ENCODE measurements at regions of chr2 and their contacts with region 1.

Region 1: DNA sequence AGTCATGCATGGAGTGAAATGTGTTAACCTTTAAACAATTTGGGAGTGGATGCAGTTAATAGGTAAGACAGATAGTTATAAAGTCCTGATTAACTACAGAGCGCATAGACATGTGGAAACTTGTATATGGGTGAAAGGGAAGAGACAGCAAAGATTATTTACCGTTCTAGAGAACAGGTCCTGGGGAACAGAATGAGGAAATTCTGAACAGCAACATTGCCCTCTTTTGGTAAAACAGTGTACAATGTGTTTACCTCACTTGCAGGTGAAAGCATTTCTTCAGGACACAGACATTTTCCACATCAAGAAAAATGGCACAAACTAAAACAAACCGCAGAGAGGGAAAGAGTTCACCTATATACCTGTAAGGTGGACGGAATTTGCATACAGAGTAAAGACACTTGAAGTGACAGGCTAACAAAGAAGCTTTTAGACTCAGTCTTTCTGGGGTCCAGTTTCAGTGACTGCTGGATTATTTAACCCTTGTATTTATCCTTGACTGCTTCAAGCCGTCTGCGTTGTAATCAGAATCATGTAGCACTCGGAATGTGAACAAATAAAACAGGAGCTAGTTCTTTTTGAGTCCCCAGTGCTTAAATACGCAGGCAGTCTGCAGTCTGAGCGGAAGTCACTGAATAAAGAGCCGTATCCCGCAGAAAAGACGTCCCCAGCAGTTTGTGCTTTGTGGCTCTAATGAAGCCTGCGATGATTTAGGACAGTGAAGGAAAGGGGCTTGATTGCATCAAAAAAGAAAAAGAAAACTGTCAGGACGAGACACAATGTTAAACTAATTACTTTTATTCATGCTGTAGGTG is 364.8 kb upstream of the GALNT5 start:
- DNase-seq: peak; percentile 46
- H3K4me3 ChIP-seq: peak overlapping the region in 1 of 3 experiments; percentile 56
- H3K27ac ChIP-seq: no peak overlapping the region
- H3K4me1 ChIP-seq: peaks cover 9% of the 10 kb centered on the region
- H3K27me3 ChIP-seq: peaks cover 14 to 35% of the 10 kb centered on the region in 2 experiments
- CTCF ChIP-seq: peak in 1 of 2 donors; percentile 5
- POLR2A ChIP-seq: no peak

Region 2: GRCh38 chr2:155755481-155755880 is 1137.2 kb before region 1 on chr2:
- CTCF ChIA-PET with region 1: no interaction called
- POLR2A ChIA-PET with region 1: no interaction called
- dilution Hi-C with region 1: no loop called
- intact Hi-C with region 1: loop called (anchors 5 kb)
- DNase-seq: no peak
- H3K4me3 ChIP-seq: no peak overlapping the region
- H3K27ac ChIP-seq: no peak overlapping the region
- H3K4me1 ChIP-seq: no peaks in the 10 kb centered on the region
- H3K27me3 ChIP-seq: no peaks in the 10 kb centered on the region
- CTCF ChIP-seq: no peak
- POLR2A ChIP-seq: no peak

Region 3: DNA sequence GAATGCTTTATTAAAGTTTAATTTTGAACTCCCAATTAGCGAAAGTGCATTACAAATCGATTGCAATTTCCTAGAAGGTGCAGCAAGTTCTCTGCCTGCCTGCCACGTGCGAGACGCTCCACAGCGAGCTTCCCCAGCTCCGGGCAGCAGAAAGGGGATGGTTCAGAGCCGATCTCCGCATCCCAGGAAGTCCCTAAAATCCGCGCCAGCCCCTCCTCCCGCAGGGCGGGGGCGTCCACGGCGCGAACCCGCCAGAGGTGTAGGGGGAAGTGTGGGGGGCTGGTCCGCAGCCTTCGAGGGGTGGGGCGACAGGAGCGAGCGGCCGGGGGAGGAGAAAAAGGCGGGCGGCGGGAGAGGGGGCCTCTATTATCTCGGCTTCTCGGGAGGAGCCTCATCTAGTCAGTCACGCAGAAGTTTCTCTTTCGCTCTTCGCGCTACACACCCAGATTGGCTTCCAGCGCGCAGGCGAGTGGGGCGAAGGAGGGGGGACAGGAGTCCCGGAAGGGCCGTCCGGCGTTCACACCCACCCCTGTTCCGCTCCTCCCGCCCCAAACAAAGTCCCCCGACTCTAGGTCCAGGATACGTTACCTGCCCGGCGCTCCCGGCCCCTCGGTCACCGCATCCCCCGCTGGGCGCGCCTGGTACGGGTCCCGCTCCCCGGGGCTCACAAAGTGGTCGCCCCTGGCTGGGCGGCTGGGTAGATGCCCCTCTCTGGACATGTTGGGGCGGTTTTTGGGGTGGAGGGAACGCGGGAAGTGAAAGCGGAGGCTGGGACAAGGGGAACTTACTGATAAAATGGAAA is 551.0 kb before region 1 on chr2:
- CTCF ChIA-PET with region 1: no interaction called
- POLR2A ChIA-PET with region 1: no interaction called
- dilution Hi-C with region 1: no loop called
- intact Hi-C with region 1: loop called (anchors 5 kb)
- DNase-seq: peak; percentile 83
- H3K4me3 ChIP-seq: peak overlapping the region; percentile 69 to 97 (median 87)
- H3K27ac ChIP-seq: peak overlapping the region; percentile 100
- H3K4me1 ChIP-seq: peaks cover 11% of the 10 kb centered on the region
- H3K27me3 ChIP-seq: no peaks in the 10 kb centered on the region
- CTCF ChIP-seq: no peak
- POLR2A ChIP-seq: peak; percentile 35

Measured in endothelial cell of umbilical vein (primary cell).